GM12878 (cell line): ENCODE measurements at regions of chr12 and their contacts with region 1.

Region 1: DNA sequence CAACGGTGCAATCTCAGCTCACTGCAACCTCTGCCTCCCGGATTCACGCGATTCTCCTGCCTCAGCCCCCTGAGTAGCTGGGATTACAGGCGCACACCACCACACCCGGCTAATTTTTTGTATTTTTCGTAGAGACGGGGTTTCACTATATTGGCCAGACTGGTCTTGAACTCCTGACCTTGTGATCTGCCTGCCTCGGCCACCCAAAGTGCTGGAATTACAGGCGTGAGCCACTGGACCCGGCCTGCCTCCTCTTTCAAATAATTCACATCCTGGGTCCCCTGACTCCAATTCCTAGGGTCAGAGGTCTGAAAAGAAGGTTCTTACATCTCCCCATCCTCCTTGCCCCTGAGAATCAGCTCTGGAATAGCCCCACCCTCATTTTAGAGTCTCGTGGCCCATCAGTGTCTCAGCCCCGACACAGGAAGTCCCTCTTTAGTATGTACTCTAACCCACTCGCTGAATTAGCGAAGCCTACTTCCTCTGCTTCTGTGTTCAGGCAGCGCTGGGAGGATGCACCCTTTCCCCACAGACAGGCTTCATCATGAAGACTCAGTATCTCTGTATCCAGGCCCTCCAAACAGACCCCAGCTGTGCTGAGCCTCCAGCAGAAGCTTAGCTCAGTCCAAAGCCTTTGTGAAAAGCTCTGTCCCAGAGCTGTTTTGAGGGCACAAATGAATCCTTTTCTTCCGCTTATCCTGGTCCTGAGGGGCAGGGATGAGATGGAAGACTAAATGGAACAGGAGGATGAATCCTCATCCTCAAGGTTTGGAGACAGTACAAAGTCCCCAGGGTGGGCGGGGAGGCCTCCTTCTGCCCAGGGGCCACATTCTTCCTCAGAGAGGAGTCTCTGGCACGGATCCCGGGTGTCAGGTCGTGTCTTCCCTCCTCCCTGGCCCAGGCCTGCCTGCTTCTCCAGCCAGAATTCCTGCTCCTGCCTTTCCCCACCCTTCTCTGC is 3.5 kb downstream of the LPAR5 start:
- DNase-seq: peak; percentile 81
- ATAC-seq: peak; percentile 78
- H3K4me3 ChIP-seq: peak overlapping the region; percentile 57
- H3K27ac ChIP-seq: peak overlapping the region; percentile 90
- H3K4me1 ChIP-seq: peaks cover 52% of the 10 kb centered on the region
- H3K27me3 ChIP-seq: no peaks in the 10 kb centered on the region
- CTCF ChIP-seq: no peak
- EP300 ChIP-seq: peak in 1 of 2 experiments; percentile 12; a peak in 1 of 4 replicates
- POLR2A ChIP-seq: peak; percentile 85
- RAD21 ChIP-seq: no peak

Region 2: GRCh38 chr12:5872735-5873134 is 759.6 kb before region 1 on chr12:
- CTCF ChIA-PET with region 1: no interaction called
- POLR2A ChIA-PET with region 1: no interaction called
- RAD21 ChIA-PET with region 1: no interaction called
- SMC1A ChIA-PET with region 1: no interaction called
- in situ Hi-C with region 1: no loop called
- intact Hi-C with region 1: no loop called
- DNase-seq: no peak
- ATAC-seq: no peak
- H3K4me3 ChIP-seq: no peak overlapping the region
- H3K27ac ChIP-seq: no peak overlapping the region
- H3K4me1 ChIP-seq: no peaks in the 10 kb centered on the region
- H3K27me3 ChIP-seq: peaks cover 0 to 2% of the 10 kb centered on the region in 2 experiments; a peak in 1 of 4 replicates
- CTCF ChIP-seq: peak in 2 of 3 experiments; percentile 14 to 22; a peak in 2 of 6 replicates
- EP300 ChIP-seq: no peak
- POLR2A ChIP-seq: no peak
- RAD21 ChIP-seq: no peak; the same call in 1 of the 2 replicates

Region 3: DNA sequence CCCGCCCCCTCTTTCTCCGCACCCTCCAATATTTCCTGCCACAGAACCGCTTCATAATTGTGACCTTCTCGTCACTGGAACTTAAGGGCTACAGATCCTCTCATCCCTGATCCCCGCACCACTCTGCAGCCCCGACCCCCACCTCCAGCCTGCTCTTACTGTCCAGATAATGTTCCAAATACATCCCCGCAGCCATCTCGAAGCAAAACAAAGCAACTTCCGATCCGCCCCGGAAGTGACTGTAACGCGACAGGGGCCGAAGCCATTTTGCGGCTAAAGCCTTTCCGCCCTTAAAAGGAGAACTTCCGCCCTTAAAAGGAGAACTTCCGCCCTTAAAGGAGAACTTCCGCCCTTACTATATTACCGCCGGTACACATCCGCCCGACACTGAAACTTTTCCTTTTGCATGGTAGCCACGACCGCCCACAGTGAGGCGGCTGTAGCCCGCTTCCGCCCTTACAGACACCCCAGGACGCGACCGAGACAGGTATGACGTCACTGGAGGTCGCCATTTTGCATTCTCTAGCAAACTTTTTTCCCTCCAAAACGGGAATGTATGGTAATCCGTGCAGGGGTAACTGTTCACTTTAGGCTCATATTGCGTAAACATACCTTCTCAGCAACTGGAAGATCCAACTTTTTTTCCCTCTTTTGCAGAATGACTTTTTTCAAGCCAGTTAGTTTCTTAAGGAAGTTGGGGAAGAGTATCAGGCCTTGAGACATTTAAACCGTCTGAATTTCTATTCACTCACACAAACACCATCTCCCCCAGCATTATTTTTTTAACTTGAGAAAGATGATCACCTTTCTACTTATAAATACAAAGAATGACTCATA is 30.8 kb after region 1 on chr12 and contains the start of gene ING4:
- CTCF ChIA-PET with region 1: interaction called, 3 read pairs
- POLR2A ChIA-PET with region 1: interaction called, 3 read pairs
- RAD21 ChIA-PET with region 1: interaction called, 3 read pairs
- SMC1A ChIA-PET with region 1: interaction called, 8 read pairs
- in situ Hi-C with region 1: no loop called
- intact Hi-C with region 1: loop called (anchors 1 kb)
- DNase-seq: peak; percentile 96
- ATAC-seq: peak; percentile 100
- H3K4me3 ChIP-seq: peak within 1 kb of the TSS; percentile 96
- H3K27ac ChIP-seq: peak within 1 kb of the TSS; percentile 80
- H3K4me1 ChIP-seq: no peaks in the 10 kb centered on the region; the same call in 1 of the 2 replicates
- H3K27me3 ChIP-seq: no peaks in the 10 kb centered on the region
- CTCF ChIP-seq: no peak
- EP300 ChIP-seq: peak in 1 of 2 experiments; percentile 50; a peak in 1 of 4 replicates
- POLR2A ChIP-seq: peak; percentile 68
- RAD21 ChIP-seq: no peak
- polyA plus RNA-seq, gene ING4: 7.2 to 8.9 TPM

Region 4: DNA sequence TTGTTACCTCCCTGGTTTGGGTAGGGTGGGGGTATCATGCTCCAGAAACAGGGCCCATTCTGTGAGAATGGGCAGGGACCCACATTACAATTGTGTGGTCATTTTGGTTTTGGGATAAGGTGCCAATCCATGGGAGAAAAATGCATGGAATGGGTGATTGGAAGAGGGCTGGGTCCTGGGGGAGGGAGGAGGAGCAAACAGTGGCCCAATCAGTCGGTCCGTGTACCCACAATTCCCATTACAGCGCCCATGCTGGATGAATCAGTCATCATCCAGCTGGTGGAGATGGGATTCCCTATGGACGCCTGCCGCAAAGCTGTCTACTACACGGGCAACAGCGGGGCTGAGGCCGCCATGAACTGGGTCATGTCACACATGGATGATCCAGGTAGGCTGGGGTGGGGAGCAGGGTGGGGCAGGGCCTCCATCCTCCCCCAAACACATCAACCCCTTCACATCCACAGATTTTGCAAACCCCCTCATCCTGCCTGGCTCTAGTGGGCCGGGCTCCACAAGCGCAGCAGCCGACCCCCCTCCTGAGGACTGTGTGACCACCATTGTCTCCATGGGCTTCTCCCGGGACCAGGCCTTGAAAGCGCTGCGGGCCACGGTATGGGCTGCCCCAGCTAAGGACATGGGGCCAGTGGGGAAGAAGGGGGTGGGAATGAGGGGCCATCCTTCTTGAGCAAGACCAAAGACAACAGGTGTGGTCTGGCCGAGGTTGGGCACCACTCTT is 231.4 kb after region 1 on chr12:
- CTCF ChIA-PET with region 1: no interaction called
- POLR2A ChIA-PET with region 1: no interaction called
- RAD21 ChIA-PET with region 1: no interaction called
- SMC1A ChIA-PET with region 1: no interaction called
- in situ Hi-C with region 1: no loop called
- intact Hi-C with region 1: no loop called
- DNase-seq: no peak
- ATAC-seq: no peak
- H3K4me3 ChIP-seq: no peak overlapping the region
- H3K27ac ChIP-seq: no peak overlapping the region
- H3K4me1 ChIP-seq: peaks cover 6% of the 10 kb centered on the region
- H3K27me3 ChIP-seq: no peaks in the 10 kb centered on the region
- CTCF ChIP-seq: no peak
- EP300 ChIP-seq: no peak
- POLR2A ChIP-seq: no peak
- RAD21 ChIP-seq: no peak